PC-9 (cell line): ENCODE measurements at regions of chr12 and their contacts with region 1.

Region 1: DNA sequence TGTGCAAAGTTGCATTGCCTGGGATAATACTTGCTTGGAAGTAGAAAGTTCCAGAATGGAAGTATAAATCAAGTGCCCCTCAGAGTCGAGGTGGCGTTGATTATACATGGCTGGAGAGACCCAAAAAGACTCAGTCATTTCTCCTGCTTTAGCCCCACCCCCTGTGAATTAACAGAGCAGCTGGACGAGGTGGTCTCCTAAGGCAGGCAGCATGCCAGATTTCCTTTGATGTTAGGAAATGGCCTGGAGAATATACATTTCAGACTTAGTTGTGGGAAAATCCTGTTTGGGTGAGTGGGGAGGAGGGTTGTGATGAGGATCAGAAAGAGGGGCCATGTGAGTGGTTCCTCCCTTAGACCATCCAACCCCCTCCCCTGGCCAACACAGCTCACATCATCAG is 406.1 kb upstream of the TMPO start:
- DNase-seq: no peak
- H3K4me3 ChIP-seq: no peak overlapping the region
- H3K27ac ChIP-seq: no peak overlapping the region
- H3K4me1 ChIP-seq: no peaks in the 10 kb centered on the region
- H3K27me3 ChIP-seq: no peaks in the 10 kb centered on the region
- CTCF ChIP-seq: no peak

Region 2: GRCh38 chr12:97167598-97167997 is 941.7 kb before region 1 on chr12:
- CTCF ChIA-PET with region 1: no interaction called
- POLR2A ChIA-PET with region 1: no interaction called
- intact Hi-C with region 1: no loop called
- DNase-seq: no peak
- H3K4me3 ChIP-seq: no peak overlapping the region
- H3K27ac ChIP-seq: no peak overlapping the region
- H3K4me1 ChIP-seq: no peaks in the 10 kb centered on the region
- H3K27me3 ChIP-seq: no peaks in the 10 kb centered on the region; the same call in 1 of the 2 replicates
- CTCF ChIP-seq: no peak

Region 3: GRCh38 chr12:98373025-98373554 is 263.8 kb after region 1 on chr12:
- CTCF ChIA-PET with region 1: no interaction called
- POLR2A ChIA-PET with region 1: no interaction called
- intact Hi-C with region 1: no loop called
- DNase-seq: no peak
- H3K4me3 ChIP-seq: no peak overlapping the region
- H3K27ac ChIP-seq: no peak overlapping the region
- H3K4me1 ChIP-seq: no peaks in the 10 kb centered on the region
- H3K27me3 ChIP-seq: peaks cover 62% of the 10 kb centered on the region
- CTCF ChIP-seq: peak; percentile 73

Region 4: DNA sequence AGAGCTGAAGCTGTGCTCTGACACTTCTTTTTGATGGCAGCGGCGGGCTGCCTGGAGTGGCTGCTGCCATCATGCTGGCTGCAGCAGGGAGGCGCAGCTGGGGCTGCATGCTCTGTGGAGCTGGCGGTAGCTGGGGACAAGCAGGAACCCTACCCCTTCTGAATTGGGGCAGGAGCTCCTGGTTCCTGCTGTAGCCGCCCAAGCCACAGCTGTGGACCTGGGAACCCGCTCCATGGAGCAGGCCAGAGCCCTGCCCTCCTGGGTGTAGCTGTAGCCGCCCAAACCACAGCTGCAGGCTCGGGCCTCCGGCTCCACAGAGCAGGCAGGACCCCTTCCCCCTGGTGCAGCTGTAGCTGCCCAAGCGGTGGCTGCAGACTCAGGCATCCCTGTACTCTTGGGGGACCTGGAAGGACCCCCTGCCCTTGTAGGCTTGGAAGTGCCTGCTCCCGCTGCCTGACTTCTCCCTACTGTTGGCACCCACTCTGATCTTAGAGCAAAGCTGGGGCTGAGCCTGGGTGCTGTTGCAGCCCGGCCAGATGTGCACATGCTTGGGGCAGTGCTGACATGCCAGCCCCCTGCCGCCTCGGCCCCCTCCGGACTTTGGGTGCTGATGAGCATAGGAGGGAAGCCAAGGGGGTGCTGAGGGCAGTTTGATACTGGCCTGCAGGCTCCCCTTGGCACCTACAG is 569.1 kb after region 1 on chr12:
- CTCF ChIA-PET with region 1: no interaction called
- POLR2A ChIA-PET with region 1: no interaction called
- intact Hi-C with region 1: loop called (anchors 5 kb)
- DNase-seq: no peak
- H3K4me3 ChIP-seq: no peak overlapping the region
- H3K27ac ChIP-seq: no peak overlapping the region
- H3K4me1 ChIP-seq: no peaks in the 10 kb centered on the region
- H3K27me3 ChIP-seq: no peaks in the 10 kb centered on the region
- CTCF ChIP-seq: no peak